RWPE1 (cell line): ENCODE measurements at regions of chr9 and their contacts with region 1.

Region 1: DNA sequence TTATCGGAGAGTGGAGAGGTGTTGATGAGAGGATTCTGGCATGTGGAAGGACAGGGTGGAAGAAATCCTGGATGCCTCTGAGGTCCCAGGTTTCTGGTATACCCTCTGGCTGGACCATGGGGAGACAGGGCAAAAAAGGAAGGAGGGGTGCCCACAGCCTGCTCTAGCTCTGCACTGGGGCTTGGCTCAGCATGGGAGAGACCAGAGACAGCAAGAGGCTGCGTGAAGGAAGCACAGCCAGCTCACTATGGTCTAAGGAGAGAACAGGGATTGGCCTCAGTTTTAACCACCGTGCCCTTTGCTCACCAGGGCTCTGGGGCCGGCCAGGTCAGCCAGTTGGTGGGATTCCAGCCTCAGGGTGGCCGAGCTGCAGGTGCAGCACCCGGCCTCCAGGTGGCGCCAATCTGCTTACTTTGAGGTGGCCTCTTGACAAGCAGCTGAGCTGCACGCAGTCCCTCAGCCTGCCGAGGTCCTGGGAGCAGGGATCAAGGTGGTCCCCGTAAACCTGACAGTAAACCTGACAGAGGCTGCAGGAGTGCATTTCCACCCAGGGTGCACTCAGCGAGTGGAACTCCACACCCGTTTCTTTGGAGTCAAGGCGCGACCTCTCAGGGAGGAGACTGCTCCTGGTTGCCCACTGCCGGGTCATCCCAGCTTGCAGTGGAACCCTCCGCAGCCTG is 25.0 kb upstream of the SPTLC1 start:
- DNase-seq: peak; percentile 73
- H3K27ac ChIP-seq: peak overlapping the region; percentile 25; the same call in 1 of the 2 replicates
- CTCF ChIP-seq: peak; percentile 99

Region 2: GRCh38 chr9:92176068-92176799 is 36.0 kb after region 1 on chr9:
- CTCF ChIA-PET with region 1: interaction called, 15 read pairs
- POLR2A ChIA-PET with region 1: no interaction called
- DNase-seq: no peak
- H3K27ac ChIP-seq: no peak overlapping the region
- CTCF ChIP-seq: no peak

Region 3: GRCh38 chr9:92228628-92229027 is 88.4 kb after region 1 on chr9:
- CTCF ChIA-PET with region 1: interaction called, 27 read pairs
- POLR2A ChIA-PET with region 1: interaction called, 3 read pairs
- DNase-seq: no peak
- H3K27ac ChIP-seq: no peak overlapping the region
- CTCF ChIP-seq: no peak

Region 4: DNA sequence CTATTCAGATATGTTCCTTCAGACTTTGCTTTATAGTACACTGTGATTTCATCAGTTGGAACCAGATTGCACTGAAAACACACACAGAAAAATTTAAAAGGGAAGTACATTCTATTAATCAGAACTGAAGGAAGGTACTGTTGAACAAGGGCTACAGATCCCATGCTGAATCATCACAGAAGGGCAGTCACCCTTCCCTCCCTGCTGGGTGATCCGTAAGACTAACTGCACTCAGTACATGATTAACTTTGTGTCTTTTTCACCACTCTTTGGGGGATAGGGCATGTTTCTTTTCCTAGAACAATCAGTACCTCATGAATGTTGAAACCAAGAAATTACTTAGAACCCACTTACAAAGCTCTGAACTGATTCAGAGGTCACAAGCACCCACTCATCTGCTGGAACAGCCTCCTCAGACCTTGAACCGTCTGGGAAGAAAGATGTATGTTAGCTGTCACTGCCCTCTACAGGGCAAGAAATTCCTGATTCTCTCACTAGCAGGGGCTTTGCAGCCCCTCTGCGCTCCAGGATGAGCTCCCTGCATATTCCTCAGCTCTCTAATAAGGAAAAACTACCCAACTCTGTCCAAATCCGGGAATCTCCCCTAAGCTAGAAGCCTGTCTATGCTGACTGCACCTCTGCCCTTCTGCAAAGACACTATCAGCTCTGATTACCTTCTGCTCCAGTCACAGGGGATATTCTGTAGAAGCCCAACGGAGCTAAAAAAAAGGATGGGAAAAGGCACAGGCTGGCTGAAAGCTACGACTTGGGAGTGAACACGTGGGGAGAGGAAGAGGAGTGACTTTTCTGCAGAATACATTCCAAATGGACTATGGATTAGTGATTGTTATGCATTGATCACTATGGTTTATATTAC is 102.3 kb after region 1 on chr9:
- CTCF ChIA-PET with region 1: interaction called, 35 read pairs
- POLR2A ChIA-PET with region 1: no interaction called
- DNase-seq: no peak
- H3K27ac ChIP-seq: no peak overlapping the region
- CTCF ChIP-seq: peak; percentile 32; the same call in 1 of the 2 replicates